ENCODE measurements at regions of chr1 and their contacts with region 1.

Region 1: GRCh38 chr1:147545133-147545532 is 3.8 kb downstream of the BCL9 start:
- DNase-seq: peak; percentile 96
- ATAC-seq: peak; percentile 73
- H3K4me3 Mint-ChIP-seq: peak overlapping the region; percentile 40
- H3K27ac Mint-ChIP-seq: peak overlapping the region; percentile 77
- H3K4me1 Mint-ChIP-seq: peaks cover 65% of the 10 kb centered on the region
- H3K27me3 Mint-ChIP-seq: no peaks in the 10 kb centered on the region
- CTCF ChIP-seq: no peak

Region 2: GRCh38 chr1:147156638-147157037 is 388.5 kb before region 1 on chr1:
- CTCF ChIA-PET with region 1: no interaction called
- POLR2A ChIA-PET with region 1: no interaction called
- intact Hi-C with region 1: no loop called
- DNase-seq: no peak
- ATAC-seq: no peak
- H3K4me3 Mint-ChIP-seq: no peak overlapping the region
- H3K27ac Mint-ChIP-seq: no peak overlapping the region
- H3K4me1 Mint-ChIP-seq: no peaks in the 10 kb centered on the region
- H3K27me3 Mint-ChIP-seq: no peaks in the 10 kb centered on the region
- CTCF ChIP-seq: no peak

Region 3: DNA sequence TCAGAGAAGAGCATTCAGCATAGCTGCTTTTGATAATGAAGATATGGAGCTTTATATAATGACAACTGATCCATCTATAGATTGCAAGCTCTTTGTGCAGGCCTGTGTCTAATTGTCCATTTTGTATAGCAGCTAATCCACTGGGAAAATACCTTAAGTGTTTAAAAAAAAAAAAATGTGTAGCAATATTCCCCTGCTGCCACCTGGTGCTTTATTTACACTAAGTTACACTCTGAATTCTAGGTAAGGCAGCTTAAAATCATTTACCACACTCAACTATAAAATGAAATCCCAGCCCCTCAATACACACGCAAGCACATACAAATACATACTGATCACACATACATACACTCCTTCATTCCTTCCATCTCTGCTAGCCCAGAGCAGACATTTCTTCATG is 52.9 kb before region 1 on chr1:
- CTCF ChIA-PET with region 1: no interaction called
- POLR2A ChIA-PET with region 1: no interaction called
- intact Hi-C with region 1: no loop called
- DNase-seq: no peak
- ATAC-seq: no peak
- H3K4me3 Mint-ChIP-seq: no peak overlapping the region
- H3K27ac Mint-ChIP-seq: no peak overlapping the region
- H3K4me1 Mint-ChIP-seq: peaks cover 3% of the 10 kb centered on the region
- H3K27me3 Mint-ChIP-seq: peaks cover 2% of the 10 kb centered on the region
- CTCF ChIP-seq: no peak

Region 4: DNA sequence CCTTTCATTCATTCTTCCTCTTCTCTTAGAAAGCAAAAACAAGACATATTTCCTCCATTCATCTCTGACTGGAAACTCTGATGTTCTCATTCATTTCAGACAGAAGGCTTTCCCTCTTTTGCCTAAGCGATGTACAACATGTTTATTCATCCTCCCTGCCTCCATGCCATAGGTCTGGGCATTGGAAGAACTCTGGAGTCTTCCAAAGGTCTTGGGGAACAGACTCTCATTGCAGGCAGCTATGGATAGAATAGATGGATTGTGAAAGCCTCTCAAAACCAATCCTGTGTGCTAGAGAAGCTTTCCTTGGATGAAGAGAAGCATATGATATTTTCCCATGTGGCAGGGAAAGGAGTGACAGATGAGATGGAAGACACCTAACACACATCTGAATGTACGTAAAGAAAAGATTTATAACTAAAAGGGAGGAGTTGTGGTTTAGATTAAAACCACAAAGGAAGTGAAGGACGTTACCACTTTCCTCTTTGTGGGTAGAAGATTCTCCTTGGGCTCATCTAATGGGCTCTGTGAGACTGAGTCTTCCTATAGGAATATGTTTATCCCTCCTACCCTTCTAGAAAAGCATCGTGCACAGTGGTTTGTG is 34.9 kb after region 1 on chr1:
- CTCF ChIA-PET with region 1: interaction called, 8 read pairs
- POLR2A ChIA-PET with region 1: interaction called, 5 read pairs
- intact Hi-C with region 1: loop called (anchors 5 kb)
- DNase-seq: no peak
- ATAC-seq: no peak
- H3K4me3 Mint-ChIP-seq: peak overlapping the region; percentile 30
- H3K27ac Mint-ChIP-seq: peak overlapping the region; percentile 69
- H3K4me1 Mint-ChIP-seq: peaks cover 64% of the 10 kb centered on the region
- H3K27me3 Mint-ChIP-seq: peaks cover 25% of the 10 kb centered on the region
- CTCF ChIP-seq: no peak

Region 5: DNA sequence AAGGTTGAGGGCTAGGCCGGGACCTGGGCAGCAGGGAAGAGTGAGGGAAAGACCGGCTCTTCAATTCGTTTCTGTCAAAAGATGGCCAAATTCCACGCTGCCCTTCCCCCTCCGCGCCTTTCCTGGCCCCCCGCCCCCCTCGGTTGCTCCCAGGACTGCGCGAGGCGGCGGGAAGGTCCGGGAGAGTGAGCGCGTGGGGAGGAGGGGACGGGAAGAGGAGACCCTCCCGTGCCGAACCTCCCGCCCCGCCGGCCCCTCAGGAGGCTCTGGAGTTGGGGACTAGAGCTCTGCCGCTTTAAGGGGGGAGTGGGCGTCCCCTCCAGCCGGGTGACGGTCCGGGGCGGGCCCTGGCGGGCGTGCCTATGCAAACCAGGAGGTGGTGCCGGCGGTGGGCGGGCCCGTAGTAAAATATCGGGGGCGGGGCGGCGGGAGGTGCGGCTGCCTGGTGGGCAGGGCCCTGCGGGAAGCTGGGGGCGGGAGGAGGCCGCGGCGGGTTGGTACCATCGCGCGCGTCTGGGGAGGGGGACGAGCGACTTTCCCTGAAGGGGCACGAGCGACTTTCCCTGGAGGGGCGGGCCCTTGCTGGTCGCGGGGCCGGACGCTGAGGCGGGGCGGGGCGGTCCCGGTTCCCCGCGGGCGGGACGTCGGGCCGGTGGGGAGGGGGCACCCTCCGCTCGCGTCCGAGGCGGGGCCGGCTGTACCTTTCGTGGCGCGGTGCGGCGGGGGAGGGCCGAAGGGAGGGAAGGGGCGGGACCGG is 54.4 kb after region 1 on chr1:
- CTCF ChIA-PET with region 1: interaction called, 11 read pairs
- POLR2A ChIA-PET with region 1: interaction called, 38 read pairs
- intact Hi-C with region 1: no loop called
- DNase-seq: peak; percentile 98
- ATAC-seq: peak; percentile 85
- H3K4me3 Mint-ChIP-seq: peak overlapping the region; percentile 93
- H3K27ac Mint-ChIP-seq: peak overlapping the region; percentile 93
- H3K4me1 Mint-ChIP-seq: peaks cover 32% of the 10 kb centered on the region
- H3K27me3 Mint-ChIP-seq: no peaks in the 10 kb centered on the region
- CTCF ChIP-seq: no peak